ENCODE measurements at regions of chr9 and their contacts with region 1.

Region 1: DNA sequence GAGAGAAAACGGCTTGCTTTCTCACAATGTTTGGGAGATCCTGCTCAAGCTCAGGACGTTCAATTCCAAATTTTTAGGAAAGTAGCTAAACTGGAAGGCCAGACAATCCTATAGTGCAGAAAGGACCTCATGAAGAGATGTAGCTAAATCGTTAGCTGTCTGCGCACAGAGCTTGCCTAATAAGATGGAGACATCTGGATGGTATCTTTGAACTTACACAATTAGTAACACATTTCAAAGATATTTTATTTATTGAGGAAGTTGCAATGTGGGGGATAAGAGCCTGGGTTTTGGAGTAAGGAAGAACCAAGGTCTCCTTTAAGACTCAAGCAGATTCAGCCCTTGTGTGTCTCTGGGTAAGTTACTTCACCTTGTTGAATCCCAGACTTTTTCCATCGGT is 28.6 kb upstream of the RAB14 start:
- DNase-seq: no peak

Region 2: GRCh38 chr9:121246821-121247561 is 16.7 kb after region 1 on chr9:
- intact Hi-C with region 1: loop called in 1 of 2 experiments (anchors 2 kb)
- DNase-seq: no peak

Measured in posterior vena cava (tissue), 2 donors.